Psoas muscle (tissue), 8 donors: ENCODE measurements at regions of chr1 and their contacts with region 1.

Region 1: GRCh38 chr1:117758444-117759316 is 152.8 kb downstream of the TENT5C start:
- DNase-seq: peak; percentile 58 to 69
- ATAC-seq: peak; percentile 92 to 96 (median 94)
- H3K4me3 ChIP-seq: peak overlapping the region; percentile 67
- H3K27ac ChIP-seq: no peak overlapping the region
- H3K4me1 ChIP-seq: peaks cover 4% of the 10 kb centered on the region
- H3K27me3 ChIP-seq: no peaks in the 10 kb centered on the region
- CTCF ChIP-seq: peak; percentile 90

Region 2: GRCh38 chr1:117512743-117513321 is 245.8 kb before region 1 on chr1:
- intact Hi-C with region 1: loop called (anchors 2 to 5 kb)
- DNase-seq: no peak
- ATAC-seq: peak in 2 of 4 donors; percentile 28 to 50
- H3K4me3 ChIP-seq: no peak overlapping the region
- H3K27ac ChIP-seq: no peak overlapping the region
- H3K4me1 ChIP-seq: no peaks in the 10 kb centered on the region
- H3K27me3 ChIP-seq: no peaks in the 10 kb centered on the region
- CTCF ChIP-seq: peak; percentile 50

Region 3: GRCh38 chr1:117534995-117535467 is 223.6 kb before region 1 on chr1:
- intact Hi-C with region 1: loop called (anchors 1 to 5 kb)
- DNase-seq: no peak
- ATAC-seq: peak; percentile 81 to 95 (median 88)
- H3K4me3 ChIP-seq: no peak overlapping the region
- H3K27ac ChIP-seq: no peak overlapping the region
- H3K4me1 ChIP-seq: no peaks in the 10 kb centered on the region
- H3K27me3 ChIP-seq: no peaks in the 10 kb centered on the region
- CTCF ChIP-seq: peak; percentile 73

Region 4: GRCh38 chr1:117605774-117606648 is 152.7 kb before region 1 on chr1 and contains the start of gene TENT5C:
- intact Hi-C with region 1: loop called in 1 of 2 experiments (anchors 5 kb)
- DNase-seq: peak; percentile 97 to 98
- ATAC-seq: peak; percentile 94 to 98 (median 95)
- H3K4me3 ChIP-seq: peak within 1 kb of the TSS; percentile 93
- H3K27ac ChIP-seq: peak within 1 kb of the TSS; percentile 91
- H3K4me1 ChIP-seq: peaks cover 11% of the 10 kb centered on the region
- H3K27me3 ChIP-seq: no peaks in the 10 kb centered on the region
- CTCF ChIP-seq: peak; percentile 7
- total RNA-seq, gene TENT5C: 3.1 to 31.4 (median 15.9) TPM

Region 5: DNA sequence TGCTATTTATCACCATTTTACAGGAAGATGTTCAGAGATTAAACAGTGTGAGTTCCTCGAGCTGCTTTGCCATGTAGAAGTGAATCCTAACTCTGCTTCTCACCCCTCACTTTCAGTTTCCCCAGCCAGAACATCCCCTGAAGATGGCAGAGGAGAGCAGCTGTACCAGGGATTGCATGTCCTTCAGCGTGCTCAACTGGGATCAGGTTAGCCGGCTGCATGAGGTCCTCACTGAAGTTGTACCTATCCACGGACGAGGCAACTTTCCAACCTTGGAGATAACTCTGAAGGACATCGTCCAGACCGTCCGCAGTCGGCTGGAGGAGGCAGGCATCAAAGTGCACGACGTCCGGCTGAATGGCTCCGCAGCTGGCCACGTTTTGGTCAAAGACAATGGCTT is 136.0 kb before region 1 on chr1:
- intact Hi-C with region 1: loop called in 1 of 2 experiments (anchors 10 kb)
- DNase-seq: no peak
- ATAC-seq: peak; percentile 87 to 92 (median 89)
- H3K4me3 ChIP-seq: no peak overlapping the region
- H3K27ac ChIP-seq: peak overlapping the region; percentile 52
- H3K4me1 ChIP-seq: peaks cover 15% of the 10 kb centered on the region
- H3K27me3 ChIP-seq: no peaks in the 10 kb centered on the region
- CTCF ChIP-seq: peak; percentile 37

Region 6: DNA sequence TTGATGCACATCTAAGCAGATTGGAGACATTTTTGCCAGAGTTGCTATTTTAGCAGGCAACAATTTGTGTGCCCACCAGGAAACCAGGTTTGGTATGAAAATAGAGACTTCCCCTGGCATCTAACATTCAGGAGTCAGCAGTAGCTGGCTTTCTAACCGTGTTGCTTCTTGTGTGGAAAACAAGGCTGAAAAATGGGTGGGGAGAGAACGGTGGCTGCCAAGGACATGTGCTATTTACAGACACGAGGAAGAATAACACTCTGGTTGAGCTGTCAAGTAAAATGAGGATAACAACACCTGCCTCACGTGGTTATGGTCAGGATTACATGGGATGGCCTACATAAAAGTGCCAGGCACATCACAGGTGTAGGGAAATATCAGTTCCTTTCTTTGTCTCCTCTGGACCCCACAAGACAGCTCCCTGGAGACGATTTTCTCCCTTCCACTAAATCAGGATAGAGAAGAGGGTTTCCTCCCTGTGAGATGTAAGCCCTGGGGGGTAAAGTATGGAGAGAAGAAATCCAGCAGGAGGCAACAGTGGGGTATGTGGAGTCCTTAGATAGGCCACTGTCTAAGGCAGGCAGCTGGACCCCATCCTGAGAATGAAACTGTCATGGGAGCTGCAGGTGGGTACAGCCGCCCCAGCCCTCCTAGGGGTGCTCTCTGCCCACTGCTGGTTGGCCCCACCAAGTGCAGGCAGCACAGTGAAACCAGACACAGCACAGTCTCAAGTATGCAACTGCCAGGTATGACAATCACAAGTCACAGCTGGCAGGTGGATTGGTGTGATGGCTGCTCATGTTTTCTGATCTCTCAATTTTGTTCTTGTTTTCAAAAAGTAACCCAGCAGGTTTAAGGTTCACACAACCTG is 72.5 kb before region 1 on chr1:
- intact Hi-C with region 1: loop called (anchors 5 kb)
- DNase-seq: peak in 1 of 2 donors; percentile 65
- ATAC-seq: peak in 3 of 4 donors; percentile 63 to 82 (median 74)
- H3K4me3 ChIP-seq: no peak overlapping the region
- H3K27ac ChIP-seq: peak overlapping the region; percentile 78
- H3K4me1 ChIP-seq: peaks cover 49% of the 10 kb centered on the region
- H3K27me3 ChIP-seq: no peaks in the 10 kb centered on the region
- CTCF ChIP-seq: peak; percentile 11

Region 7: DNA sequence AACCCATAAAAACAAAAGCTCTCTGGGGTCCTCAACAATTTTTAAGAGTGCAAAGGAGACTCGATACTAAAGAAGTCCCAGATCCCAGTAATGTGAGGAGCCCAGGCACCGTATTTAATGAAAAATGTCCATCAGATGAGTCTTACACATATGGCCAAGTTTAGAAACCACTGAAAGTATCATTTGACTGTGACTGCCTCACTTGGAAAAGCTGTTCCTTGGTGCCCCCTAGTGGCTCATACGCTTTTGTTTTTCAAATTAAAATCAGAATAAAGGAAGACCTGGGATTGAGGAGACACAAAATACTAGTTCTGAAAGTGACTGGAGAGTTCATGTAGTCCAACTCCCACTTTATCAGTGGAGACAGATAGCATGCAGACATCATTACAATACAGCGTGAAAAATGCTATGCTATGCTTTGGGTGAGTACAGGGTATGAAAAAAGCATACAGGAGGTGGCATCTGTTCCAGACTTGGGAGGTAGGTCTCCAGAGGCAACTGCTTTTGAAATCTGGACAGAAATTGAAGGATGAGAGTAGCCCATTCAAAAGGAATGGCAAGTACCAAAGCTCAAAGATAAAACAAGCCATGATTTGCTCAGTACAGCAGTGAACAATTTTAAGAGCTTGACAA is 136.9 kb after region 1 on chr1:
- intact Hi-C with region 1: loop called in 1 of 2 experiments (anchors 10 kb)
- DNase-seq: peak in 1 of 2 donors; percentile 21
- ATAC-seq: peak; percentile 81 to 97 (median 84)
- H3K4me3 ChIP-seq: no peak overlapping the region
- H3K27ac ChIP-seq: peak overlapping the region; percentile 51
- H3K4me1 ChIP-seq: peaks cover 4% of the 10 kb centered on the region
- H3K27me3 ChIP-seq: no peaks in the 10 kb centered on the region
- CTCF ChIP-seq: peak; percentile 74

Region 8: GRCh38 chr1:119032986-119033385 is 1274.3 kb after region 1 on chr1:
- intact Hi-C with region 1: no loop called
- DNase-seq: no peak
- ATAC-seq: no peak
- H3K4me3 ChIP-seq: no peak overlapping the region
- H3K27ac ChIP-seq: no peak overlapping the region
- H3K4me1 ChIP-seq: no peaks in the 10 kb centered on the region
- H3K27me3 ChIP-seq: no peaks in the 10 kb centered on the region
- CTCF ChIP-seq: no peak